T-cell (primary cell): ENCODE measurements at regions of chr1 and their contacts with region 1.

Region 1: DNA sequence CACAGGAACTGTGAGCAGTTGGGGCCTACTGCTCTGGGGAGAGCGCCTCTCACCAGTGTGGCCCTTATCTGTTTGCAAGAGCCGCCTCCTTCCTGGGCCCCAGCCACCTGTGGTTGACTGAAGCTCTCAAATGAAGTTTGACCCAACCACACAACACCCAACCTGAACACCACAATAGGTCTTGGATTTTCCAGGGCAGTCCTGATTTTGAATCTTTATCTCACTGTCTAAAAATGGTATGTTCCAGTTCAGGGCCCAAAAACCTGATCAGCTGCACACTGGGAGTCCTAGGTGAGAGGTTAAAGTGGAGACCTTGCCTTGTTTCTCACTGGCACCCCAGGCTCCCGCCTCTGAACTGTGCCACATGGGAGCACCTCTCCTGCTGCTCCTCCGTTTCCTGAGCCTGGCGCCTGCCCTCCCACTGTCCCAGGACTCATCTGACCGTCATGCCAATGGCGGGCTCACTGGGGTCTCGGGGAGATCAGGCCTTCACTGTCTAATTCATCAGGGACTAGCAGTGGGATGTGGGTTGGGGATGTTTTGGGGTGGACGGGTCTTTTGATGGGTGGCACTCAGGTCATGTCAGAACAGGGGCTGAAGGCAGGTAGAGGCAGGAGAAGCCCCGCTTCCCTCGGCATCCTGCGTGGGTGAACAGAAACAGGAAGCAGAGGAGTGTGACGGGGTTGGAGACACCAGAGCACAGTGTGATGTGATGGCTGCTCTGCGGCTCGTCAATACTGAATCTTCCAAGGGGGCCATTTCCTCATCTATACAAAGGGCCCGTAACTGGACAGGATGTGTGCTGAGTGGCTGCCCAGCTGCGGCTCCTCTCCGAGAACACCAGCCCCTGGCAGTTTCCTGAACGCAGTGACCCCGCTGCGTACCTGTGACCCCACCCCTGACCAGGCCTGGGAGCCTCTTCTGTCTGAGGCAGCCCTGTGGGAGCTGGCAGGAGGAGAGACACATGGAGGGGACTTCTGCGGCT is 59.6 kb upstream of the ITPKB start:
- DNase-seq: peak; percentile 36 to 77 (median 58)
- ATAC-seq: peak; percentile 81 to 86 (median 84)
- H3K4me3 ChIP-seq: peak overlapping the region in 1 of 2 donors; percentile 12
- H3K4me3 Mint-ChIP-seq: peak overlapping the region; percentile 37 to 75 (median 53)
- H3K27ac ChIP-seq: peak overlapping the region; percentile 89
- H3K27ac Mint-ChIP-seq: peak overlapping the region; percentile 99
- H3K4me1 ChIP-seq: peaks cover 22 to 35% of the 10 kb centered on the region in 2 experiments
- H3K4me1 Mint-ChIP-seq: peaks cover 29 to 39% (median 35%) of the 10 kb centered on the region in 3 donors
- H3K27me3 ChIP-seq: no peaks in the 10 kb centered on the region
- H3K27me3 Mint-ChIP-seq: no peaks in the 10 kb centered on the region

Region 2: DNA sequence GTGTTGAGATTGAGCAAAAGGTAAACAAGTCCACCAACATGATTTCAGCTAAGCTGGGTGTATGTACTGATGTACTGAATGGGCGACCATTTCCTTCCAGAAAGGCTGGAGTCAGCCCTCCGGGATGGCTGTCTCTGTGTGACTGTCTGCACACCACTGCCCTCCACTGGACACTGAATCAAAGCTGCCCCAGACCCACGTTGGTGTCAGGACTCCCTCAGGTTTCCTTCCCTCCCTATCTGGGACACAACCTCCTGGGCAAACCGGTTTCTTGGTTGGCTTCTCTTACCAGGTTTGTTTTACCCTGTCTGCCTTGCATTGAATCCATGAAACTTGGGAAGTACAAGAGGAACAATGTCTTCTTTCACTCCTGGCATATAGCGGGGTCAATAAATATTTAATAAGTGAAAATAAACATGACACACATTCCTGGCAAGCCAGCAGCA is 1026.4 kb before region 1 on chr1:
- CTCF ChIA-PET with region 1: no interaction called
- POLR2A ChIA-PET with region 1: no interaction called
- DNase-seq: peak in 5 of 35 experiments; percentile 3 to 26 (median 8)
- ATAC-seq: no peak
- H3K4me3 ChIP-seq: no peak overlapping the region
- H3K4me3 Mint-ChIP-seq: no peak overlapping the region
- H3K27ac ChIP-seq: no peak overlapping the region
- H3K27ac Mint-ChIP-seq: no peak overlapping the region
- H3K4me1 ChIP-seq: peaks cover 12 to 15% of the 10 kb centered on the region in 2 experiments
- H3K4me1 Mint-ChIP-seq: peaks cover 6 to 19% (median 8%) of the 10 kb centered on the region in 3 donors
- H3K27me3 ChIP-seq: peaks cover 0 to 9% of the 10 kb centered on the region in 2 experiments
- H3K27me3 Mint-ChIP-seq: no peaks in the 10 kb centered on the region

Region 3: GRCh38 chr1:226626577-226626956 is 172.2 kb before region 1 on chr1:
- CTCF ChIA-PET with region 1: no interaction called
- POLR2A ChIA-PET with region 1: interaction called in 1 of 2 experiments, 15 read pairs
- DNase-seq: peak; percentile 48 to 86 (median 69)
- ATAC-seq: peak; percentile 83 to 95 (median 84)
- H3K4me3 ChIP-seq: peak overlapping the region; percentile 6 to 39
- H3K4me3 Mint-ChIP-seq: peak overlapping the region; percentile 29 to 65 (median 37)
- H3K27ac ChIP-seq: no peak overlapping the region
- H3K27ac Mint-ChIP-seq: peak overlapping the region; percentile 67 to 75
- H3K4me1 ChIP-seq: peaks cover 8 to 15% of the 10 kb centered on the region in 2 experiments
- H3K4me1 Mint-ChIP-seq: peaks cover 18 to 36% (median 26%) of the 10 kb centered on the region in 3 donors
- H3K27me3 ChIP-seq: peaks cover 0 to 15% of the 10 kb centered on the region in 2 experiments
- H3K27me3 Mint-ChIP-seq: peaks cover 0 to 2% of the 10 kb centered on the region in 2 donors

Region 4: DNA sequence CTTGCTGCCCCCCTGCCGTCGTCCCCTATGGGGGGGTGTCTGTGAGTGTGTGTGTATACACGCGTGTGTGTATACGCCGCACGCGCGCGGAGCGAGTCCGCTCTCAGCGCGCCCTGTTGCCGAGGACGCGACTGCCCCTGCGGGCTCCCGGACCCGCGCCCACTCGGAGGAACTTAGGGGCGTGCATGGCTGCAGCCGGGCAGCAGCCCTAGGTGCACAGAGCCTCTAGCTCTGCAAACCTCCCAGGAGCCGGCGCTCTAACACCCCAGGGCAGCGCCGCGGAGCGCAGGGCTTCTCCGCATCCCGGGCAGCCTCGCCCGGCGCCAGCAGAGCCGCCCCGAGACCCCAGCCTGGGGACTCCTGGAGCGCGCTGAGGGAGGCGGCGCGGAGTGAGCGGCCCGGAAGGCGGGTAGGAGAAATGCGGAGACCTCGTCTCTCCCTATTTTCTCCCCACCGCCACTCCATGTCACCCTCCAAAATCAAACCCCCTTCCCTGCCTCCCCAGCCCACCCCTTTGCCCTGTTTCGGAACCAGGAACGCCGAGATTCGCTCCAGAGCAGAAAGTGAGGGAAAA is 60.2 kb before region 1 on chr1:
- CTCF ChIA-PET with region 1: no interaction called
- POLR2A ChIA-PET with region 1: interaction called, 3 to 11 read pairs
- DNase-seq: peak in 20 of 35 experiments; percentile 27 to 61 (median 45)
- ATAC-seq: peak; percentile 1 to 32 (median 24)
- H3K4me3 ChIP-seq: peak overlapping the region; percentile 95 to 98
- H3K4me3 Mint-ChIP-seq: peak overlapping the region; percentile 85 to 95 (median 90)
- H3K27ac ChIP-seq: peak overlapping the region; percentile 90
- H3K27ac Mint-ChIP-seq: peak overlapping the region; percentile 96 to 98
- H3K4me1 ChIP-seq: peaks cover 36 to 42% of the 10 kb centered on the region in 2 experiments
- H3K4me1 Mint-ChIP-seq: peaks cover 36 to 49% (median 45%) of the 10 kb centered on the region in 3 donors
- H3K27me3 ChIP-seq: no peaks in the 10 kb centered on the region
- H3K27me3 Mint-ChIP-seq: no peaks in the 10 kb centered on the region

Region 5: DNA sequence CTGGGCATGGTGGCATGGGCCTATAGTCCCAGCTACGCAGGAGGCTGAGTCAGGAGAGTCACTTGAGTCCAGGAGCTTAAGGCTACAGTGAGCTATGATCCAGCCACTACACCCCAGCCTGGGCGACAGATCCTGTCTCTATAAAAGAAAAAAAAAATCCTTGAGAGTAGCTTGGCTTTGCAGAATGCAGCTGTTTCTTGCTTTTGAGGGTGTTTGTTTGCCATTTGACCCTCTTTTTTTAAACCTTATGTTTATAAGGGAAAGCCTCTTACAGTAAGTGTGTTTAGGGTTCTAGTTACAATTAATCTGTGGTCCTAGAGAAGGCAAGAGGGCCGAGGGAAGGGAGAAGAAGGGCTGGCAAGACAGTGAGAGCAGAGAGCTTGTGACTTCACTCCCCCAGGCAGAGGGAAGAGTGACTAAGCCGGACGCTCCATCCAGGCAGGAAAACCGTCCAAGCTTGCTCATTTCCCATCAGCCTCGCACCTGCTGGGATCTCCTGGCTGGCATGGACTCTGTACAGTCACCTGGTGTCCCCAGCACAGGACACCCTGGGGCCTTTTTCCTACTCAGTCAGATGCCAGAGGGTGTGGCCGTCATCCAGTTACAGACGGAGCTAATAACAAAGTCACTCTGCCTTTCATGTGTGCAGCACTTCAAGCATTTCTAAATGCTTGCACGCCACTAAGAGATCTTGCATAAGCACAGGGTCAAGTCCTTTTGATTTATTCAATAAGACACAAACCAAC is 16.2 kb after region 1 on chr1:
- CTCF ChIA-PET with region 1: no interaction called
- POLR2A ChIA-PET with region 1: interaction called, 3 to 12 read pairs
- DNase-seq: no peak
- ATAC-seq: peak in 3 of 4 experiments; percentile 45 to 77 (median 52)
- H3K4me3 ChIP-seq: no peak overlapping the region
- H3K4me3 Mint-ChIP-seq: no peak overlapping the region
- H3K27ac ChIP-seq: no peak overlapping the region
- H3K27ac Mint-ChIP-seq: peak overlapping the region; percentile 14 to 69
- H3K4me1 ChIP-seq: no peaks in the 10 kb centered on the region
- H3K4me1 Mint-ChIP-seq: peaks cover 8 to 20% (median 12%) of the 10 kb centered on the region in 3 donors
- H3K27me3 ChIP-seq: no peaks in the 10 kb centered on the region
- H3K27me3 Mint-ChIP-seq: no peaks in the 10 kb centered on the region

Region 6: GRCh38 chr1:226870401-226871279 is 71.9 kb after region 1 on chr1 and contains the start of gene PSEN2:
- CTCF ChIA-PET with region 1: no interaction called
- POLR2A ChIA-PET with region 1: no interaction called
- DNase-seq: peak in 29 of 35 experiments; percentile 7 to 61 (median 33)
- ATAC-seq: peak; percentile 82 to 89 (median 88)
- H3K4me3 ChIP-seq: peak within 1 kb of the TSS; percentile 47 to 73
- H3K4me3 Mint-ChIP-seq: peak within 1 kb of the TSS; percentile 78 to 84 (median 81)
- H3K27ac ChIP-seq: no peak within 1 kb of the TSS
- H3K27ac Mint-ChIP-seq: no peak within 1 kb of the TSS
- H3K4me1 ChIP-seq: peaks cover 2 to 18% of the 10 kb centered on the region in 2 experiments
- H3K4me1 Mint-ChIP-seq: peaks cover 11 to 20% (median 19%) of the 10 kb centered on the region in 3 donors
- H3K27me3 ChIP-seq: peaks cover 3 to 25% of the 10 kb centered on the region in 2 experiments
- H3K27me3 Mint-ChIP-seq: peaks cover 4 to 11% of the 10 kb centered on the region in 2 donors
- total RNA-seq, gene PSEN2: 1.9 to 5.6 (median 4.0) TPM